Kidney (tissue), 22 donors: ENCODE measurements at regions of chr3 and their contacts with region 1.

Region 1: DNA sequence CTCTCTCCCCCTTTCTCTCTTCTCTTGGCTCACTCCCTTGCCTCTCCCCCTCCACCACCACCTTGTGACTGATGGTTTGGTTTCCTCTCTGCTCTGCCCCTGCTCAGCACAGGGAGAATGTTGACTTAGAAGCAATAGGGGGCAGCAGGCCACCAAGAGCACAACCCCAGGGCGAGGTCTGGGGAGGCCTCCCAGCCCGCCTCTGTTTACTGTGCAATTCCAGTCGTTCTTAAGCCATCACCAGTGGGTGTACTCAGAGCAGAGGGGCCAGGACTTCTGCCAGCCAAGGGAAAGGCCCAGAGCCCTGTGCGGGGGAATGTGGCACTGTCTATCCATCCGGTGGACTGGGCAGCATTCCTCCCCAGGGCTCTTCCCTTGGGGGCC is 5.7 kb upstream of the APEH start:
- DNase-seq: no peak
- H3K4me3 ChIP-seq: no peak overlapping the region
- H3K27ac ChIP-seq: no peak overlapping the region
- H3K4me1 ChIP-seq: peaks cover 2 to 33% (median 22%) of the 10 kb centered on the region in 3 donors
- H3K27me3 ChIP-seq: no peaks in the 10 kb centered on the region
- CTCF ChIP-seq: no peak

Region 2: DNA sequence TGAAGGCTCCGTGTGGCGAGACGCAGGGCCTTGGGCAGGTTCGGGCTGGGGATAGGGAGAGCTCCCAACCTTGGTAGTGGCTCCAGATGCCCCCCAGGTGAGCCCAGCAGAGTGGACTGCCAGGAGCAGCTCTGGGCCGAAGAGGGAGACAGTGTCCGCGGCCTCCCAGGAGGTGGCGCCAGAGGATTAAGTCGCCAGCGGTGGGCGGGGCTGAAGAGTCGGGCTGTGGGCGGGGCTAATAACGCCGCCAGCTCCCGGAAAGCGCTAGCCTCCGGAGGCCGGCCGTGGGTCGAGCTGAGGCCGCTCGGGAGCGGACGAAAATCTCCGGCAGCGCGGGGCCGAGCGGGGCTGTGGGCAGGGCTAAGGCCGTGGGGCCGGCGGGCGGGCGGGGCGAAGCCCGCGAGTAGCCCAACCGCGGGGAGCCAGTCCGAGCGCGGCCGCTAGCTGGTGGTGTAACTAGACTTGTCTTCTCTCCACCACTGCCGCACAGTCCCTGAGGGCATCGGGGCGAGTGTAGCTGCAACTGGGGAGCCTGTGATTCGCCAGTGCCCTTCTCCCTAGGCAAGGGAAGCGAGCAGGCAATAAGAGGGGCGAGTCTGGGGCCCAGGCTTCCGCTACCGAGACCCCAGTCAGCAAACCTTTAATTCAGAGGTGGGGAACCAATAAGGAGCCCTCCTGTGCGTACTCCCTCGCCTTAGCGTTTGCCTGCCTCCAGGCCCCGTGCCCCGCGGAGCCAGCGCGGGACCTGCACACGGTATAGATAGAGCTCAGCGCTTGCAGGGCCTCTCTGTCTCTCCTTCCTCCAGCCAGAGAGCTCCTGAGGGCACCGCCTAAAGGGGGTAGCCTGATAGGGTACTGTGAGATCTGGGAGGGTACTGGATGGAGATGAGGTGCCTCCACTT is 128.5 kb before region 1 on chr3:
- intact Hi-C with region 1: loop called (anchors 10 kb)
- DNase-seq: peak; percentile 95 to 98 (median 97)
- H3K4me3 ChIP-seq: peak overlapping the region; percentile 61 to 66 (median 62)
- H3K27ac ChIP-seq: peak overlapping the region; percentile 59 to 73
- H3K4me1 ChIP-seq: peaks cover 0 to 21% (median 15%) of the 10 kb centered on the region in 3 donors
- H3K27me3 ChIP-seq: no peaks in the 10 kb centered on the region
- CTCF ChIP-seq: peak; percentile 91